Activated T-helper 1 cell treated with anti-CD3 and anti-CD28 coated beads, Interleukin-12 subunit alpha, Interleukin-12 subunit beta, Interleukin-2, Interleukin-4 antibody, amounts not matched to agents 30 ng/mL and 10 ng/mL and 1 ng/mL, durations not matched to agents 14 hours and 24 hours and 36 hours (primary cell): ENCODE measurements at regions of chr21 and their contacts with region 1.

Region 1: DNA sequence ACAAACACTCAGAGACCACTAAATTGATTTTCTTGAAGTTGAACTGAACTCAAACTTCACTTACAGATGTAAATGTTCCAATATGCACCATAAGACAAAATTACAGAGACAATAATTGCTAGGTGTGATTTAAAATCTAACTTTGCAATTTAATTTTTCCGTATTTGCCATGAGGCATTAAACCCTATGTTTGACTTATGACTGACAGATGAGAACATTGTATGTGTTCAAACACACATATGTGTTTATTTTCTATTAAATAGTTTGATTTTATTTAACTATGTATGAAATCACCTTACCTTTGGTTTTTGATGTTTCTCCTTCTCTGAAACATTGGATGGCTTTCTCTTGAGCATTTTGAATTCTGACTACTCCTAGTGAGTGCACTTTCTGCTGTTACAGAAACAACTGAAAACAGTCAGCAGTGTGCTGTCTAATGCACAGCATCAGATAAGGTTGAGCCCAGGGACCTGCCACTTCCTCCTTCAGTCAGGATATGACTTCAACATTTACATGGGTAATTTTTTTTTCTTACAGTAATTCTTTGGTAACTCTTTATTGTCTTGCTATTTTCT is at the start of gene SAMSN1:
- DNase-seq: peak; percentile 73
- H3K4me3 Mint-ChIP-seq: peak within 1 kb of the TSS; percentile 98
- H3K27ac Mint-ChIP-seq: peak within 1 kb of the TSS; percentile 92
- H3K4me1 Mint-ChIP-seq: peaks cover 81% of the 10 kb centered on the region
- H3K27me3 Mint-ChIP-seq: no peaks in the 10 kb centered on the region
- total RNA-seq, gene SAMSN1: 115 and 119 TPM in 2 replicates

Region 2: GRCh38 chr21:14487490-14488432 is 58.2 kb before region 1 on chr21:
- intact Hi-C with region 1: loop called (anchors 2 kb)
- DNase-seq: no peak
- H3K4me3 Mint-ChIP-seq: peak overlapping the region; percentile 31
- H3K27ac Mint-ChIP-seq: peak overlapping the region; percentile 90
- H3K4me1 Mint-ChIP-seq: peaks cover 74% of the 10 kb centered on the region
- H3K27me3 Mint-ChIP-seq: no peaks in the 10 kb centered on the region

Region 3: DNA sequence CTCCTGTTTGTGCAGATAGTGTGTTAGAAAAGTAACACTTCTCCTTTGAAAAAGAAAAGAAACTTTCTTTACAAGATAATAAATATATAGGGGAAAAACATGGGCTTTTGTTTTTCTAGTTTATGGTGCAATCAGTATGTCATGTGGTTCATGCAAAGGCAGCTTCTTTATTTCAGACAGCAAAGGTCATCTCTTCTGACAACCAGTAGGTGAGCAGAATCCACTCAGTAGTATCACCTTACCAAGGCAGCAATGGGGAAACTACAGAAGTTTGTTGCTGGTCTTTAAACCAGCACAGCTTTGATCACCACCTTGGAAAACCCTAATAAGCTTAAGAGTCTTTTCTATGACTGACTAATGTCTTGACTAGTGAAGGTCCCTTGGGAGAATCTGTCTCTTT is 13.1 kb after region 1 on chr21:
- intact Hi-C with region 1: loop called (anchors 1 kb)
- DNase-seq: no peak
- H3K4me3 Mint-ChIP-seq: no peak overlapping the region
- H3K27ac Mint-ChIP-seq: peak overlapping the region; percentile 45
- H3K4me1 Mint-ChIP-seq: peaks cover 78% of the 10 kb centered on the region
- H3K27me3 Mint-ChIP-seq: no peaks in the 10 kb centered on the region

Region 4: DNA sequence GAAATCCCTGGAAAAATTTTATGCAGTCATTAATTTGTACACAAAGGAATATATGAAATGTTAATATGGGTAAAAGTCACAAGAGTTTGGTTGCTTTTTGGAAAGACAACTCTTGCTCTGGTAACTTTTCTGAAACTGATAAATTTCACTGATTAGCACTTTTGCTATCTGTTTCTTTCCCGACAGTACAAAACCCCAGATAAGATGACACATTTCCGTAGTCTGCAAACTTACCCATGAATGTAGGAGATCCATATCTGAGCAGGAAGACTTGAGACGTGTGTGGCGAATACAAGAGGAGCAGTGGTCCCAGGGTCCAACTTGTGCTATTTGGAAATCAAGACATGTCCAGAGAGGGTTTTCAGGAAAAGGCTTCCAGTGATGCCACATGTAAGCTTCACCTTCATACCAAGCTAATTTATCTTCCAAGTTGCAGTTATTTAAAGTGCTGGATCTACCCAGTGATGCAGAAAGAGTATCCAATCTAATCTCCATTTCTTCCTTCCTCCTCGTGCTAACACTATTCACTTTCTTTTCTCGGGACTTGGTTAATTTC is 36.0 kb after region 1 on chr21:
- intact Hi-C with region 1: loop called (anchors 1 kb)
- DNase-seq: no peak
- H3K4me3 Mint-ChIP-seq: peak overlapping the region; percentile 9
- H3K27ac Mint-ChIP-seq: peak overlapping the region; percentile 7
- H3K4me1 Mint-ChIP-seq: peaks cover 58% of the 10 kb centered on the region
- H3K27me3 Mint-ChIP-seq: no peaks in the 10 kb centered on the region

Region 5: DNA sequence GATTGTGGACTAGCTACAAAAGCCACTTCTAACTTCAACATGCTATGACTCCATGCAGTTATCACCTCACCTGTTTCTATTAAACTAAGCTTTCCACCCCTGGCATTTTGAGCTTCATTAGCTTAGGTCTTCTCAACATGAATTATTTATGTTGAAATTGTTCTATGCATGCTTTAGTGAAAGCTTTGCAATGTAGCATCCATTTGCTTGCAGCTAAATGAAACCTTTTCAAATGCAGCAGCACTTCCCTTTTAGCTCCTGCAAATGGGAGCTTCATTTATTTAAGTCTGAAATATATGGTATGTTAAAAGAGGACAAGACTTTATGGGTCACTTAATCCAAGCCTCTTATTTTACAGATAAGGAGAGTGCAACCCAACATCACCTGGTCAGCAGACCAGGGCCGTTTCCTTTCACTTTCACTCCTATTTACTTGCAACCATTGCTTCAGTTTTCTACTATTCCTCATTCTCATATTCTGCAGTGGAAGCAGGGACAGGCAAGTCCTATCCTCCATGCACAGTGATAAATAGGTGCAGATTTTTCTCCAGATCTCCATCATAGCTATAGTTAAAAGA is 56.5 kb after region 1 on chr21:
- intact Hi-C with region 1: no loop called
- DNase-seq: no peak
- H3K4me3 Mint-ChIP-seq: peak overlapping the region; percentile 63
- H3K27ac Mint-ChIP-seq: peak overlapping the region; percentile 10
- H3K4me1 Mint-ChIP-seq: peaks cover 38% of the 10 kb centered on the region
- H3K27me3 Mint-ChIP-seq: no peaks in the 10 kb centered on the region

Region 6: GRCh38 chr21:14620152-14620551 is 74.2 kb after region 1 on chr21:
- intact Hi-C with region 1: loop called (anchors 1 kb)
- DNase-seq: peak; percentile 4
- H3K4me3 Mint-ChIP-seq: no peak overlapping the region
- H3K27ac Mint-ChIP-seq: peak overlapping the region; percentile 74
- H3K4me1 Mint-ChIP-seq: peaks cover 37% of the 10 kb centered on the region
- H3K27me3 Mint-ChIP-seq: peaks cover 3% of the 10 kb centered on the region

Region 7: DNA sequence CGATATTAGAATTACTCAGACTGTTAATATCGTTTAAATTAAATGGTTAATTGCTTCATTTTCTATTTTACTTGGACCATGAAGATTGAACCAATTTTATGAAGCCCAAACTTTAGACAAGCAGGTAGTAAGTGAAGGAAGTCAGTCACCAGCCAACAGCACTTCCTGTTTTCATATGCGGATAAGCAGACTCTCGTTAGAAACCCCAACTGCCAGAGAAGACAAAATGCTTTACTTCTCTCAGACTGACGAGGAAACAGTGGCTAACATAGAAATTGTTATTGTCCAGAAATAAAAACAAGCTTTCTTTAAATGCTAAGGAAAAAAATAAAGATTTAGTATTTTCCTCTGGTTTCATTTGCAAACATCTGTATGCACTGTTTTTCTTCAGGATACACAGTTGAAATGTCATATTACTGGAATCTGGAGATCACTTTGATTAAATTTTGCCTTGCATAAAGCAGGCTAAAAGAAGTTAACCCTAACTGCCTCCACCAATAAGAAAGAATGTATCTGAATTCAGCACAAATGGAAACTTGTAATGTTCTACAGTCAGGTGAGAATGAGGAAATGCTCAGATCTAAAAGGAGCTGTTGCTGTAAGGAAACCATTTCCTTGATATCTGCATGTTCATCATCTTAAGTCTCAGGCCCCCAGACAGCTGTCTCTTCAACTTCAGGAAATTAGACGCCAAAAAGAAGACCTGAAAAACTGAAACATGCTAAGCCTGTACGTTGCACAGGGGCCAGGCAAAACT is 130.0 kb after region 1 on chr21:
- intact Hi-C with region 1: loop called (anchors 5 kb)
- DNase-seq: no peak
- H3K4me3 Mint-ChIP-seq: peak overlapping the region; percentile 74
- H3K27ac Mint-ChIP-seq: peak overlapping the region; percentile 97
- H3K4me1 Mint-ChIP-seq: peaks cover 49% of the 10 kb centered on the region
- H3K27me3 Mint-ChIP-seq: no peaks in the 10 kb centered on the region

Region 8: DNA sequence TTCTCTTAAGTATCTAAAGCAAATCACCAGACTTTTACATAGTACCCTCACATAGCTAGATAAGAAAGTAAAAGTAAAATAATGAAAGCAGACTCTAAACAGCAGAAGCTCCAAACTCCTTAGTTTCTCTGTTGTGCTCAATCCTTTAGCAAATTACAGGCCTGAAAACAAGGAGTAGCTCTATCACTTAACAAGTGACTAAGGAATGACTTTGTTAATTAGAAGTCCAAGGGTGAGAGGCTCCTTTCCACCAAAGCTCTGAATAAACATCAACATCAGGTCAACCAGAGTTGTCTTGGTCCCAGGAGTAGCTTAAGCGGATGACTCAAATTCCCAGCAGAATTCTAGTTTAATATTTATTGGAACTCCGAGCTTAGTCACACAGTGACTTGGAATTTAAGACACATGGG is 512.9 kb after region 1 on chr21:
- intact Hi-C with region 1: no loop called
- DNase-seq: no peak
- H3K4me3 Mint-ChIP-seq: peak overlapping the region; percentile 35
- H3K27ac Mint-ChIP-seq: no peak overlapping the region
- H3K4me1 Mint-ChIP-seq: peaks cover 87% of the 10 kb centered on the region
- H3K27me3 Mint-ChIP-seq: peaks cover 2% of the 10 kb centered on the region